ENCODE measurements at regions of chr11 and their contacts with region 1.

Region 1: DNA sequence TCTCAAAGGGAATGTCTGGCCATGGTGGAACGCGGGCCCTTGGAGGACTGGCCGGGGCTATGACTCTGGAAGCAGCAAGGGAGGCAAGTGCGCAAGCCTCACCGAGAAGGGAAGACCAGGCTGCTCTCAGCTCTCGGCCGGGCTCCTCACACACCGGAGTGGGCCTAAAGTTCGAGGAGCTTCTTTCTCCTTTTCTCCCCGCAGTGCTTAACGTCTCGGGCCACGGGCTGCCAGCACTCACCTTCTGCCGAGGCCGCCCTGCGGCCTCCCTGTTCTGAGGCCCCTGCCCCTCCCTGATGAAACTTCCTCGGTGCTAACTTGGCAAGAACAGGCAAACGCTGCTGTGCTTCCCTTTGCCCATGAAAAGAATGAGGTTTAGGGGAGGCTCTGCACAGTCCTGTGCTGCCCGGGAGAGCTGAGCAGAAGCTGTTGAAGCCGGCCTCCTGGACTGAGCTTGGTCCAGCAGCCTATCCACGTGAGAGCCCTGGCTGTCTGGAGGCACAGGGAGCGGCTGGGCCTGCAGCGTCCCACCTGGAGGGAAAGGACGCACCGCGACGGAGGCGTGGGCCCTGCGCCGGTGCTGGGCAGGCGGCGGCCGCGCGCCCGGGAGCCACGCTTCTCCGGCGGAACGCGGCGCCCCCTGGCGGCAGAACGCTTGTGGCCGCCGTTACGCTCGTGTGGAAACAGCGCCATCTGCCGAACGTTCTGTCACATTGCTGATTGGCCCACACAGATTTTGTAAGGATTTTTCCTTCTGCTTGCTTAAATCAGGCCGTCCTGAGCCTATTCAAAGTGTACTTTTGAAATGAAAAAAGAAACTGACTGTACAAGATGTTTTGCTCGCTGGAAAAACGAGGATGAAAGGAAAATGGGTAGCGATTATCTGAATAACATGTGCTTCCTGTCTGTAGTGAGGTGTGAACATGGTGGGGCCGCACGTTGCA is 65.0 kb upstream of the TMEM45B start:
- DNase-seq: peak; percentile 82
- H3K4me3 ChIP-seq: peak overlapping the region in 1 of 2 experiments; percentile 31; a peak in 1 of 4 replicates
- H3K27ac ChIP-seq: no peak overlapping the region
- H3K4me1 ChIP-seq: peaks cover 0 to 3% of the 10 kb centered on the region in 2 experiments; a peak in 1 of 4 replicates
- H3K27me3 ChIP-seq: peaks cover 24% of the 10 kb centered on the region
- CTCF ChIP-seq: peak; percentile 88
- EP300 ChIP-seq: no peak
- RAD21 ChIP-seq: peak; percentile 82

Region 2: DNA sequence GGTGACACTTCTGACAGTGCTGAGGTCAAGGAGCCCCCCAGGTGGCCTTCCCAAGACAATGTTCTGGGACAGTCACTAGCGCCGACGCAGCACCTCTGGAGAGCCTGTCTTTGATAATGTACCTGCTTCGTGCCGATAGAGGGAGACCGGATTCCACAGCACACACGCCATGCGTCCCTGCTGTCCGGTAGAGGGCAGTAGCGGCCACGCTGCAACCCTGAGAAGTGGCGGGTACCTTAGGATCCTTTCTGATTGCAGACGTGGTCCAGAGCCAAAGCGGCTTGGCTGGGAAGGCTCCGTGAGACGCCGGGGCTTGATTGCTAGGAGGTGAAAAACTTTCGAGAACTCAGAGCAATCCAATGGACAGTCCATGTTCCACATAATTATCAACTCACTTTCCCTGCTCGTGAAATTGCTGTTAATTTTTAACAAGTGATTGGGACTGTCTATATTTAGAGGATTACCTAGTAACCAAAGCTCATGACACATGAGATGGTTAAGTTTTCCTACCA is 386.4 kb before region 1 on chr11:
- CTCF ChIA-PET with region 1: interaction called, 17 read pairs
- POLR2A ChIA-PET with region 1: no interaction called
- DNase-seq: peak; percentile 79
- H3K4me3 ChIP-seq: peak overlapping the region in 1 of 2 experiments; percentile 28; a peak in 1 of 4 replicates
- H3K27ac ChIP-seq: no peak overlapping the region
- H3K4me1 ChIP-seq: peaks cover 0 to 12% of the 10 kb centered on the region in 2 experiments; a peak in 2 of 4 replicates
- H3K27me3 ChIP-seq: peaks cover 43% of the 10 kb centered on the region
- CTCF ChIP-seq: peak; percentile 98
- EP300 ChIP-seq: no peak
- RAD21 ChIP-seq: peak; percentile 92

Region 3: DNA sequence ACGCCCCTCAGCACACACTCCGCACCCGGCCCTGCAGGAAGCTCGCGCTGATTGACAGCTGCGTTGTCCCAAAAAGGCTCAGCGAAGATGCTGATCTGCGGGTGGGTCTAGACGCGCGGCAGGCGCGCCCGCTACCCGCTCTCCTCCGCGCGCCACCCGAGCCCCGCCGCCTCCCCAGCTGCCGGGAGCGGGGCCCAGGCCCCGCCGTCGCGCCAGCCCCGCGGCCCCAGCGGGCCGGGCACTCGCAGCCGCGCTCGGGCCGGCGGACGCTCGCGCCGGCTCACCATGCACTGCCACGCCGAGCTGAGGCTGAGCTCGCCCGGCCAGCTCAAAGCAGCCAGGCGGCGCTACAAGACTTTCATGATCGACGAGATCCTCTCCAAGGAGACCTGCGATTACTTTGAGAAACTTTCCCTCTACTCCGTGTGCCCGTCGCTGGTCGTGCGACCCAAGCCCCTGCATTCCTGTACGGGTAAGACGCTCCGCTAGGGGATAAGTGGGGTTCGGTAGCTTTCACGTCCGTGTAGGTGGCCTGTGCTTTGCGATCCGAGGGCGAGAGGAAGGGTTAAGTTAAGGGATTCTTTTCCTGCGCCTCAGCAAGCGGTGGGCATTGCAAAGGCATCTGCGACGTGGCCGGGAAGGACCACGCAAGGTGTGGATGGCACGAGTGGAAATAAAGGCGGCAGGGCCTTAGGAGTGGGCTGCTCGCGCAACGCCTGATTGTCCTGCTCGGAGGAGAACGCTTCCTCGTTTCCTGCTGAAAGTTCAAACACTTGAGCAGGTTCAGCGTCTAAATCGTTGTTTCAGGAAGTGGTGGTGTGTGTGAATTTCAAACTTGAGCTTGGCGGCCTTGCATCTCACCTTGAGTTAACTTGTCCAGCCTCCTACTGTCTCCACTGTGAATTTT is 374.6 kb before region 1 on chr11 and contains the start of gene BARX2:
- CTCF ChIA-PET with region 1: interaction called, 23 read pairs
- POLR2A ChIA-PET with region 1: no interaction called
- DNase-seq: peak; percentile 70
- H3K4me3 ChIP-seq: no peak within 1 kb of the TSS; a peak in 2 of 4 replicates
- H3K27ac ChIP-seq: no peak within 1 kb of the TSS
- H3K4me1 ChIP-seq: peaks cover 0 to 7% of the 10 kb centered on the region in 2 experiments; a peak in 1 of 4 replicates
- H3K27me3 ChIP-seq: peaks cover 93% of the 10 kb centered on the region
- CTCF ChIP-seq: peak; percentile 49
- EP300 ChIP-seq: no peak
- RAD21 ChIP-seq: peak; percentile 59
- polyA plus RNA-seq, gene BARX2: not detected in 2 replicates

Region 4: DNA sequence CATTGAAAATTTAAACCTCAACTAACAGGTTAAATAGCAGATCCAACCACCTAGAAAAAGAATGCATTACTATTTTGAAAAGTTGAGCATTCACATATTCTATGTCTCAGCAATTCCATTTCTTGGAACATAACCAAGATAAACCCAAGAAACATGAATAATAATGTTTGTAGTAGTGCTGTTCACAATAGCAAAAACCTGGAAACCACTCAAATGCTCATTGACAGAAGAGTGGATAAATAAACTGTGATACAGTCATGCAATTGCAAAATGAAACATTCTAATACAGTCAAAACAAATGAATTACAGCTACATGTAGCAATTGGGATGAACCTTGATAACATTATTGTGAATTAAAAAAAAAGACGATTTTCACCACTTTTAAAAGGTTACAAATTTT is 97.8 kb before region 1 on chr11:
- CTCF ChIA-PET with region 1: no interaction called
- POLR2A ChIA-PET with region 1: no interaction called
- DNase-seq: no peak
- H3K4me3 ChIP-seq: no peak overlapping the region
- H3K27ac ChIP-seq: no peak overlapping the region
- H3K4me1 ChIP-seq: no peaks in the 10 kb centered on the region
- H3K27me3 ChIP-seq: no peaks in the 10 kb centered on the region
- CTCF ChIP-seq: no peak
- EP300 ChIP-seq: no peak
- RAD21 ChIP-seq: no peak

Region 5: GRCh38 chr11:129740110-129740719 is 10.4 kb before region 1 on chr11:
- CTCF ChIA-PET with region 1: interaction called, 12 read pairs
- POLR2A ChIA-PET with region 1: no interaction called
- DNase-seq: no peak
- H3K4me3 ChIP-seq: no peak overlapping the region
- H3K27ac ChIP-seq: no peak overlapping the region
- H3K4me1 ChIP-seq: peaks cover 0 to 3% of the 10 kb centered on the region in 2 experiments; a peak in 1 of 4 replicates
- H3K27me3 ChIP-seq: peaks cover 7% of the 10 kb centered on the region; the same call in 1 of the 2 replicates
- CTCF ChIP-seq: no peak
- EP300 ChIP-seq: no peak
- RAD21 ChIP-seq: no peak

Region 6: DNA sequence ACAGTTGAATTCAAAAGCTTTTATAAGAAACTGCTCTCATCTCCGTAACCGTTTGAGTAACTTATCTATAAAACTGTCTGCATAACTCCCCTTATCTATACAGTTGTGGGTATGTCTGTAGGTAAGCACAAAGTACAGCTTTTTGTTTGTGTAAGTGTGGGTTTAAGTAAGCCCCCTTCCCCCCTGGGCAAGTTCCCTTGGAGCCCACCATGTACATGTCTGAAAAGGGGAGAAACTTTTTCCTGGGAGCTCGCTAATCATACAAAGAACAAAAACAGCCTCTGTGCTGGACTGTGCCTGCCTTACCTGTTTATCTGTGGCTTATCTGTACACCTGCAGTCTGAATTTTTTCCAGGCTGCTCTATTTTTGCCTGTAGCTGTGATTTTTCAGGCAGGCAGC is 28.7 kb after region 1 on chr11:
- CTCF ChIA-PET with region 1: interaction called, 10 read pairs
- POLR2A ChIA-PET with region 1: no interaction called
- DNase-seq: no peak
- H3K4me3 ChIP-seq: no peak overlapping the region
- H3K27ac ChIP-seq: no peak overlapping the region
- H3K4me1 ChIP-seq: peaks cover 0 to 2% of the 10 kb centered on the region in 2 experiments; a peak in 1 of 4 replicates
- H3K27me3 ChIP-seq: peaks cover 11% of the 10 kb centered on the region; the same call in 1 of the 2 replicates
- CTCF ChIP-seq: no peak
- EP300 ChIP-seq: no peak
- RAD21 ChIP-seq: no peak